ENCODE measurements at regions of chr2 and their contacts with region 1.

Region 1: GRCh38 chr2:135913727-135914365 is 37.6 kb upstream of the MCM6 start:
- DNase-seq: peak; percentile 38
- H3K4me3 Mint-ChIP-seq: no peak overlapping the region
- H3K27ac Mint-ChIP-seq: no peak overlapping the region
- H3K4me1 Mint-ChIP-seq: peaks cover 15% of the 10 kb centered on the region
- H3K27me3 Mint-ChIP-seq: no peaks in the 10 kb centered on the region

Region 2: DNA sequence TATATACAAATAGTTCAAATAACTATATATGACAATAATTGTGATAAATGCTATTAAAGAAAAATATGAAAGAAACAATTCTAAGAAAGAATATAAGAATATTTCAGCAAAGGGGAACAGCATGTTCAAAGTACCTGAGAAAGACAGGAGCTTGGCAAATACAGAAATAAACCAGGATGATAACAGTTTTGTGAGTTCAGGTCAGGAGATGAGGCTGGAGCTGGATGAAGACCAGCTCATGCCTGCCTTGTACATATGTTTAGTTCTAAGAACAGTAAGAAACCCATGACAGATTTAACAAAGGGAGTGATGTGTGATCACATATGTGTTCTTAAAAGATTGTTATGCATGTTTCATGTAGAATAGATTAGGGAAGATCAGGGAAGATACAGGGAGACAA is 284.3 kb before region 1 on chr2:
- CTCF ChIA-PET with region 1: no interaction called
- POLR2A ChIA-PET with region 1: no interaction called
- DNase-seq: no peak
- H3K4me3 Mint-ChIP-seq: no peak overlapping the region
- H3K27ac Mint-ChIP-seq: no peak overlapping the region
- H3K4me1 Mint-ChIP-seq: no peaks in the 10 kb centered on the region
- H3K27me3 Mint-ChIP-seq: no peaks in the 10 kb centered on the region

Region 3: DNA sequence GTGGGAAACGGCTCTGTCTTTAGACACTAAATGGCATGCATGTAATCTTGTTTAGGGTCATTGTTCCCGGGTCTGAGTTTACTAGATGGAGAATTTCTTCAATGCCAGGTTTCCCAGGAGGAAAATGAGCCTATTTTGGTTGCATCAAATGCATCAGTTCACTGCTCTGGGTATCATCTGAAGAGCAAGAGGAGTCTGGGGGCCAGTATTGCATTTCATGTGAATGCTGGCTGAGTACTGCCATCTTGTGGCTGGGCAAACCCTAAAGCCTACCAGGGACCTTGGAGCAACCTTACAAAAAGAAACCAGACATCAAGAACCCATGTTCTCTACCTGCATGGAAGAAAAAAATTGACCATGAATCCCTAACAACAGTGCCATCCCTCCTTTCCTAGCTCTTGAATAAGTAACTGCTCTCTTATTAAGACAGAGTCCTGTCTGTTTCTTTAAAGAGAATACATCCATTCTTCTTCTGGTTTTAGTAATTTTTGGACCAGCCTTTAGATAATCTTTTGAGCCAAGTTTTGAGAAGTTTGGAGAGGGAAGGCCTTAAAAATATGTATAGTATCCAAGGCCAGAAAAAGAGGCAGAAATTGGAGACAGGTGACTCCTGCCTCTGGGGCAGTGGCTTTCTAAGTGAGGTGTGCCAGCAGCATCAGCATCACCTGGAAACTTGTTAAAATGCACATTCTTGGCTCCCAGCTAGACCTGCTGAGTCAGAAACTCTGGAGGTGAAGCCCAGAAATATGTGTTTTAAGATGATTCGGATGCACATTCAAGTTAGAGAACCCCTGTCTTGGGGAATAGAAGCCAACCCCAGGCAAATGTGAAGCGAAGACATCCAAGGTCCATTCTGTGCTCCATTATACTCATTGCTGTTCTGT is 465.1 kb after region 1 on chr2:
- CTCF ChIA-PET with region 1: interaction called, 263 read pairs
- POLR2A ChIA-PET with region 1: interaction called, 12 read pairs
- DNase-seq: peak; percentile 82
- H3K4me3 Mint-ChIP-seq: no peak overlapping the region
- H3K27ac Mint-ChIP-seq: peak overlapping the region; percentile 37
- H3K4me1 Mint-ChIP-seq: peaks cover 87% of the 10 kb centered on the region
- H3K27me3 Mint-ChIP-seq: no peaks in the 10 kb centered on the region

Region 4: DNA sequence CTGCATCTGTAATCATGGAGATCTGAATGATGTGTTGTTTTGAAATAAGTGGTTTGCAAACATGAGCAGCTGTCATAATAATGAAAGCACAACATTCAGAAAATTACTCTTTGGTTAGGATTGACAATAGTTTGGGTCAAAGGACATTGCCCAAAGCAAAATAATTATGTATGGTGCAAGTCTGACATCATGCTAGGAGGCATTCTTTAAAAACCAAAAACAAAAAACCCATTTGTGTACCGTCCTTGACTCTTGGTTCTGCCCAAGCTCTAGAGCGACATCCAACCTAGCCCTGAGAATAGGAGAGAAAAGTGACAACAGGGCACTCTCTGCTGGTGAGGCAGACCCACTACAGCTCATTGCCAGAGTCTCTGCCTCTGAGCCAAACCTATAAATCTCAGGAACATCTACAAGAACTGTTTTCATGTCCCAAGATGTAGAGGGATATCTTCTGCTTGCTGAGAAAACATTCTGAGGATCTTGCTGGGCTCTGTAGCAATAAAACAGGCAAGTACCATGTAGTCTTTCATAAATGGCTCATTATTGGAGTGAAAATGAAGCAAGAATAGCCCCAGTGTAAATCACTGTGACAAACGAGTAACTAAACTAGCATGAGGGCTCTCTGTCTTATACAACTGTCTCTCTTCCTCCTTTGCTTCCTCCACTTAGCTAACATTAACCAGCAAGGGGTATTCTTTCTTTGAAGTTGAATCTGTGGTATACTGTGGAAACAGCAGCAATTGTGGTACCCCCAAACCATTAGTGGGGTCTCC is 470.9 kb after region 1 on chr2:
- CTCF ChIA-PET with region 1: interaction called, 263 read pairs
- POLR2A ChIA-PET with region 1: interaction called, 12 read pairs
- DNase-seq: peak; percentile 64
- H3K4me3 Mint-ChIP-seq: peak overlapping the region; percentile 11
- H3K27ac Mint-ChIP-seq: peak overlapping the region; percentile 91
- H3K4me1 Mint-ChIP-seq: peaks cover 45% of the 10 kb centered on the region
- H3K27me3 Mint-ChIP-seq: no peaks in the 10 kb centered on the region